Aorta (tissue), 5 donors: ENCODE measurements at regions of chr5 and their contacts with region 1.

Region 1: DNA sequence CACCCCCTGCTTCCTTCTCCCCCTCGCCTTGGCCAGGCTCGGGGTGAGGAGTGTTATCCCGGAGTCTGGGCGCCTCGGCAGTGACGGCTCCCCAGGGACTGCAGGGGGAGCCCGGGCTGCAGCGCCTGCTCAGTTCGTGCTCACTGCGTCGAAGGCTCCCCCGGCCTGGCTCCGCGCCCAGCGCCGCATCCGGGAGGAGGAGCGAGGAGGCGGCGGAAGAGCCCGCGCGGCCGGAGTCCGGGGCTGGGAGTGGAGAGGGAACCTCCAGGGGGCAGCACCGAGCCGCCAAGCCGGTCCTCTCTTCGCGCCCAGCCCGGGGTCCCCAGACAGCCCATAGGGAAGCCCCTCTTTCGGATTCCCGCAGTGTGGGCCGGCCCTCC is 1.3 kb upstream of the EGR1 start:
- DNase-seq: peak; percentile 98 to 99
- ATAC-seq: peak; percentile 90
- H3K4me3 ChIP-seq: peak overlapping the region; percentile 36 to 60
- H3K27ac ChIP-seq: peak overlapping the region; percentile 37 to 93
- H3K4me1 ChIP-seq: no peaks in the 10 kb centered on the region
- H3K27me3 ChIP-seq: peaks cover 0 to 2% of the 10 kb centered on the region in 2 donors

Region 2: GRCh38 chr5:138491669-138492559 is 27.9 kb after region 1 on chr5:
- intact Hi-C with region 1: loop called in 1 of 2 experiments (anchors 2 kb)
- DNase-seq: peak; percentile 95 to 97
- ATAC-seq: peak; percentile 96
- H3K4me3 ChIP-seq: peak overlapping the region; percentile 49 to 54
- H3K27ac ChIP-seq: peak overlapping the region in 1 of 2 donors; percentile 2
- H3K4me1 ChIP-seq: no peaks in the 10 kb centered on the region
- H3K27me3 ChIP-seq: no peaks in the 10 kb centered on the region

Region 3: DNA sequence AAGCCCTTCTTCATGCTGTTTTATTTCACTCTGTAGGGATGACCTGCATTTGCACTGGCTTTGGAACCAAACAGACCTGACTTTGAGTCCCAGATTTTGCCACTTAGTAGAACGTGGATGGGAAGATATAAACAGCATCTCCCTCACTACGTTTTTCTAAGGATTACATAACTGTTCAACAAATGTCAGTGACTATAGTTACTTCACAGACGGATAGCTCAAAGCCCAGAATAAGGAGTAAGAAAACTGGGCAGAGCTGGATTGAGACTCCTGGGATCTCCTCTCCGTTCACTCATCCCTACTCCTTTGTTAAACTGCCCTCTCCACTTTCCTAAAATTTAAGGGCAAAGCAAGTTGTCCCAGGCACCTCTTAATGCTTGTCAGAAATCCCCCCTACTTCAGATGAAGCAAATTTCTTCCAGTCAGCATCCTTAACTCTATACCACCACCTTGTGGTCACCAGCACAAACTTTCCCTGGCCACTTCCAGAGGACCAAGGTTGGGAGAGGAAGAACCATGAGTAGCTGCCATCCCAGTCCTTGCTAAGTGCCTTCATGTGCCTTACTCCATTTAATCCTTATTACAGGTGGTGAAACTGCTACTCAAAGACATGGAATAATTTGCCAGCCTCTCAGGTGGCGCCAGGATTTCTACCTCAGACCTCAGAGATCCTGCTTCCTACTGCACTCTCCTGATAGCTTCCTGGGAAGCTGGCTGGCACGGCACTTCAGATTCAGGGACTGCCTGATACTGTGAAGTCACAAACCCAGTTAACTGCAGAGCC is 39.7 kb after region 1 on chr5:
- intact Hi-C with region 1: loop called in 1 of 2 experiments (anchors 1 kb)
- DNase-seq: no peak
- ATAC-seq: peak; percentile 91
- H3K4me3 ChIP-seq: no peak overlapping the region
- H3K27ac ChIP-seq: peak overlapping the region in 1 of 2 donors; percentile 14
- H3K4me1 ChIP-seq: no peaks in the 10 kb centered on the region
- H3K27me3 ChIP-seq: no peaks in the 10 kb centered on the region

Region 4: DNA sequence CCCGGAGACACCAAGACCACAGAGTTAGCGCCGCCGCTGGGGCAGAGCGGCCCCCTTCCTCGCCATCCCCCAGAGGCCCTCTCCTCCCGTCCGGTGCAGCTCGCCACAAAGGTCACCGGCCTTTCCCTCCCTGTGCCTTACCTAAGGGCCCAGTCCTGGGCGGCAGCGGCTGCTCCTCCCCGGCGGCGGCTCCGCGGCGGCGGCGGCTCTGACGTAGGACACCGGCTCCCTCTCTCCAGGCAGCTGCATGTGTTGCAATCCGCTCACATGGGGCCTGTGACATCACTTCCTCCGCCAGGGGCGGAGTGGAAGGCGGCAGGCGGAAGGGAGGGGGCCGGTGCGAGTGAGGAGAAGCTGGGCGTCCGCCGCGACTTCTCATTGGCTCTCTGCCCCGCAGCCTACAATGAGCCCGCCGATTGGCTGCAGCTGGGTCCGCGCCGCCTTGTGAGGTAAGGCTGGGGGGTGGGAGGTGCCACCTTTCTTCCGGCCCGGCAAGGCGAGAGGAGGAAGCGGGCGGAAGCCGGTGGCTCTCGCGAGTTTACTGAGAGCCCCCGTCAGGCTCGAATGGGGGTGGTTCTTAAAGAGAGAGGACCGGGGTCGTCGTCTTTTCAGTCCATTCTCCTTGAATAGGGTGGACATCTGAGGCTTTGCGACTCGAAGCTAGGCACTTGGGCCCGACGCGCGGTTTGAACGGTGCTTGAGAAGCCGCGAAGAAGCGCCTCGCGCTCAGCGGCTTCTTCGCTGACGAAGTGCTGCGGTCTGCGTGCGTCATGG is 79.1 kb after region 1 on chr5 and contains the start of gene ETF1:
- intact Hi-C with region 1: loop called in 1 of 2 experiments (anchors 5 kb)
- DNase-seq: peak; percentile 100
- ATAC-seq: peak; percentile 98
- H3K4me3 ChIP-seq: peak within 1 kb of the TSS; percentile 78 to 91
- H3K27ac ChIP-seq: peak within 1 kb of the TSS; percentile 72 to 94
- H3K4me1 ChIP-seq: peaks cover 0 to 2% of the 10 kb centered on the region in 2 donors
- H3K27me3 ChIP-seq: no peaks in the 10 kb centered on the region
- total RNA-seq, gene ETF1: 69.2 to 101 TPM

Region 5: GRCh38 chr5:138752951-138753793 is 289.2 kb after region 1 on chr5 and contains the start of gene CTNNA1:
- intact Hi-C with region 1: loop called in 1 of 2 experiments (anchors 10 kb)
- DNase-seq: peak; percentile 83 to 94
- ATAC-seq: peak; percentile 89
- H3K4me3 ChIP-seq: peak within 1 kb of the TSS; percentile 96 to 99
- H3K27ac ChIP-seq: peak within 1 kb of the TSS; percentile 100
- H3K4me1 ChIP-seq: peaks cover 3 to 8% of the 10 kb centered on the region in 2 donors
- H3K27me3 ChIP-seq: no peaks in the 10 kb centered on the region
- total RNA-seq, gene CTNNA1: 425 to 446 TPM